Spleen (tissue), 13 donors: ENCODE measurements at regions of chr9 and their contacts with region 1.

Region 1: DNA sequence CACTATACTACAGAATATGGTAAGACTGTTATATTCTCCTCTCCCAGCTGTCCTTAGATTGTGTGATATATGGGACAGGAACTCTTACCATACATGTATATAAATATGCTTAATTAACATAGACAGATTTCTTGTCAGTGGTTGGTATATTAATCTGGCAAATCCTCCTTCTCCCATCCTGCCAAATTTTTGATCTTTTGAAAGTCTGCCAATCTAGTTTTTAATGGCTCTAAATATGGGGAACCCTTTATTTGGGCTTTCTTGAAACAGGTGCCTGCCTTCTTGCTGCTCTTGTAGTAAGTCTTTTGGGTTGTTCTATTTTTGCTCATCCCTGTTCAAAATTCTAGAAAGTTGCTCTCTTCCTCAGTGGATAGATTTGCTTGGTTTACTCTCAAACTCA is 63.5 kb downstream of the SPATA31D1 start:
- DNase-seq: no peak
- H3K4me3 ChIP-seq: no peak overlapping the region
- H3K27ac ChIP-seq: no peak overlapping the region
- H3K4me1 ChIP-seq: no peaks in the 10 kb centered on the region
- H3K27me3 ChIP-seq: no peaks in the 10 kb centered on the region
- CTCF ChIP-seq: no peak
- POLR2A ChIP-seq: no peak

Region 2: GRCh38 chr9:81868145-81868544 is 183.9 kb before region 1 on chr9:
- intact Hi-C with region 1: loop called (anchors 5 kb)
- DNase-seq: no peak
- H3K4me3 ChIP-seq: no peak overlapping the region
- H3K27ac ChIP-seq: no peak overlapping the region
- H3K4me1 ChIP-seq: no peaks in the 10 kb centered on the region
- H3K27me3 ChIP-seq: peaks cover 0 to 18% (median 0%) of the 10 kb centered on the region in 7 donors
- CTCF ChIP-seq: no peak
- POLR2A ChIP-seq: no peak